PC-9 (cell line): ENCODE measurements at regions of chr11 and their contacts with region 1.

Region 1: DNA sequence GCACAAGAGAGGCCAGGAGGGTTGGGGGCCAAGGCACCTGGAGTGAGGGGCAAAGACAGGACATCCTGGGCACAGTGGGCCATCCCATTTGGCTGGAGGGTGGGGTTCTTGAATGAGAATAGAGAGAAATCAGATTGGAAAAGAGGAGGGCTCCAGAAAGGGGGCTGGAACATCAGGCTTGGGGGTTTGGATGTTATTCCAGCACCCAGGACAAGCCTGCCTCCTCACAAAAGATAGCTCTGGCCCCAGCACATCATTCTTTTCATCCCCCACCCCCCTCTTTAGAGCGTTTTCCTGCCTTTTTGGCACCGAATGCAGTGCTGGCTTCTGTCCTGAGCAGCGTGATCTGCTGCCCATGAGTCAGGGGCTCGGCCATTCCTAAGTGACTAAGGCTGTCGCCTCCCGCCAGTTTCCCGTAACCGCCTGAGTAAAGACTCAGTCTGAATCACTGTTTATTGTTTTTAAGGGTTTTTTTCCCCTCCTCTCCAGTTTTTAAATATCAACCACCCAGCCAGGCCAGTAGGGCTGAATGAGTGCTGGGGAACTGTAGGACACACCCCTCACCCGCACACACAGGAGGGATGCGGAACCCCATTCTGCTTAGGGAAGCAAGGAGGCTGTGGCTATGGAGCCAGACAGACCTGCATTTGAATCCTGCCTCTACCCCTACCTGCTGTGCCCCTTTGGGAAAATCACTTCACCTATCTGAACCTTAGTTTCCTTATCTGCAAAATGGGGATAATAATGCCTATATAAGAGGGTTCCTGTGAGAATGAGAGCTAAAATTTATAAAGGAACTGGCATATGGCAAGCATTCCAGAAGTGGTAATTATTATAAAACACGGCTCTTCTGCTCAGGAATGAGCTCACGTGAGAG is 32.4 kb upstream of the NAV2 start:
- DNase-seq: peak; percentile 84 to 92
- H3K4me3 ChIP-seq: no peak overlapping the region
- H3K27ac ChIP-seq: peak overlapping the region; percentile 74
- H3K4me1 ChIP-seq: peaks cover 41% of the 10 kb centered on the region
- H3K27me3 ChIP-seq: no peaks in the 10 kb centered on the region
- CTCF ChIP-seq: 0 out of 2 replicates have a peak, but pooled peaks have one; percentile 24

Region 2: DNA sequence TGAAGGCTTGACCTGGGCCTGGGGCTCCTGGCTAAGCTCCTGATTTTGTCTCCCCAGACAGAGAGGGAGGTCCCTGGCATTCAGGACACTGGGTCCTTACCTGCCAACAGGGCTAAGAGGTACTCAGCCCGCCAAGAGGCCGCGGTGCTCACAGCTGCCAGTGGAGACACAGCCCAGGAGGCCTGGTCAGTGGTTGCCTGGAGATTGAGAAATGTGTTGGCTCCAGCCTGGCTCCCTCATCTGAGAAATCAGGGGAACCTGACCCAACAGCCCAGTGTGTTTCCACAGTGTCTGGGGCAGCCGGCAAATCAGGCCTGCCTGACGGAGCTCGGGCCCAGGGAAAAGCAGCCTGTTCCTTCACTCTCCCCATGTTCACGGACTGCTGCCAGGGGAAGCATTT is 46.9 kb before region 1 on chr11:
- CTCF ChIA-PET with region 1: no interaction called
- POLR2A ChIA-PET with region 1: no interaction called
- intact Hi-C with region 1: no loop called
- DNase-seq: no peak
- H3K4me3 ChIP-seq: no peak overlapping the region
- H3K27ac ChIP-seq: no peak overlapping the region
- H3K4me1 ChIP-seq: no peaks in the 10 kb centered on the region
- H3K27me3 ChIP-seq: no peaks in the 10 kb centered on the region
- CTCF ChIP-seq: no peak

Region 3: GRCh38 chr11:19646921-19647320 is 33.3 kb before region 1 on chr11:
- CTCF ChIA-PET with region 1: no interaction called
- POLR2A ChIA-PET with region 1: no interaction called
- intact Hi-C with region 1: loop called (anchors 5 kb)
- DNase-seq: peak; percentile 49 to 66
- H3K4me3 ChIP-seq: no peak overlapping the region
- H3K27ac ChIP-seq: no peak overlapping the region
- H3K4me1 ChIP-seq: peaks cover 8% of the 10 kb centered on the region
- H3K27me3 ChIP-seq: no peaks in the 10 kb centered on the region
- CTCF ChIP-seq: no peak

Region 4: DNA sequence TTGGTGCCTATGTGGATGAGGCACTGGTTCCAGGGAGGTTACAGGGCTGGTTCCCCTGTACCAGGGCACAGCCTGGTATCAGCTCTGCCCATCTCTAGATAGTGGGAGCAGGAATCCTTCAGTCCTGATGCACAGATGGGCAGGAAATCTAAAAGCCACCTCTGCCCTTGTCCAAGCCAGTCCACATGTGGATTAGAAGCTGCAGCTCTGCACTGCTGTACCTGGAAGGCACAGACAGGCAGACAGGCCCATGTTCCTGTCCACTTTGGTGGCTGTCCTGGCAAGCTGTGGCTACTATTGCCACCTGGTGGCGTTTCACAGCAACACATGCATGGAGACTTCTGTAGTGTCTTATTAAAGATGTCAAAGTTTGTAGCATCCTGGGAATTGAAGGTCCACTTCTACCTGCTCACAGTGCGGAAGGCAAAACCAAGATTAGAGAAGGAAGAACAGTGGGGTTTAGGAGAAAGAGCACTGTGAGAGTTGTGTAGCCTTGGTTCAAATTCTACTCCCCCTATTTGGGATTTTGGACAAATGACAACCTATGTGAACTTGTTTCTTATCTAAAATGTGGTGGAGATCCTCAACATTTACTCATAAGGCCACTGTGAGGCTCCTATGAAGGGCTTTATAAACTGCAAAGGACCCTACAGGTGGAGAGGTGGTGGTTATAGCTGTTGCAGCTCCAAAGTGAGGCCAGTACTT is 62.5 kb after region 1 on chr11:
- CTCF ChIA-PET with region 1: no interaction called
- POLR2A ChIA-PET with region 1: no interaction called
- intact Hi-C with region 1: no loop called
- DNase-seq: peak; percentile 61 to 79
- H3K4me3 ChIP-seq: no peak overlapping the region
- H3K27ac ChIP-seq: no peak overlapping the region
- H3K4me1 ChIP-seq: peaks cover 6% of the 10 kb centered on the region; the same call in 1 of the 2 replicates
- H3K27me3 ChIP-seq: no peaks in the 10 kb centered on the region
- CTCF ChIP-seq: peak; percentile 94